ENCODE measurements at regions of chr2 and their contacts with region 1.

Region 1: GRCh38 chr2:112666764-112667122 is 21.0 kb downstream of the SLC20A1 start:
- DNase-seq: no peak
- H3K4me3 ChIP-seq: no peak overlapping the region
- H3K27ac ChIP-seq: no peak overlapping the region
- H3K4me1 ChIP-seq: peaks cover 4% of the 10 kb centered on the region
- H3K27me3 ChIP-seq: no peaks in the 10 kb centered on the region
- CTCF ChIP-seq: no peak

Region 2: GRCh38 chr2:112601751-112602150 is 65.0 kb before region 1 on chr2:
- CTCF ChIA-PET with region 1: no interaction called
- dilution Hi-C with region 1: no loop called
- in situ Hi-C with region 1: no loop called
- intact Hi-C with region 1: no loop called
- DNase-seq: peak; percentile 35
- H3K4me3 ChIP-seq: no peak overlapping the region
- H3K27ac ChIP-seq: no peak overlapping the region
- H3K4me1 ChIP-seq: peaks cover 22% of the 10 kb centered on the region
- H3K27me3 ChIP-seq: no peaks in the 10 kb centered on the region
- CTCF ChIP-seq: no peak

Region 3: DNA sequence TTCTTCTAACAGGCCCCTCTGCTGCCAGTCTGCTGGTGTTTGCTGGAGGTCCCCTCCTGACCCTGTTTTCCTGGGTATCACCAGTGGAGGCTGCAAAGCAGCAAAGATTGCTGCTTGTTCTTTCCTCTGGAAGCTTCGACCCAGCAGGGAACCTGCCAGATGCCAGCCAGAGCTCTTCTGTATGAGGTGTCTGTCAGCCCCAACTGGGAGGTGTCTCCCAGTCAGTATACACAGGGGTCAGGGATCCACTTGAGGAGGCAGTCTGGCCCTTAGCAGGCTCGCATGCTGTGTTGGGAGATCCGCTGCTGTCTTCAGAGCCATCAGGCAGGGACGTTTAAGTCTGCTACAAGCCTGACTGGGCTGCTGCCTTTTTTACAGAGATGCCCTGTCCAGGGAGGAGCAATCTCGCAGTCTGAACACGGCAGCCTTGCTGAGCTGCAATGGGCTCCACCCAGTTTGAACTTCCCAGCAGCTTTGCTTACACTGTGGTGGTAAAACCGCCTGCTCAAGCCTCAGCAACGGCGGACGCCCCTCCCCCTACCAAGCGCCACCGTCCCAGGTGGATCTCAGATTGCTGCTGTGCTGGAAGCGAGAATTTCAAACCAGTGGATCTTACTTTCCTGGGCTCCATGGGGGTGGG is 52.4 kb before region 1 on chr2:
- CTCF ChIA-PET with region 1: no interaction called
- dilution Hi-C with region 1: loop called (anchors 5 kb)
- in situ Hi-C with region 1: no loop called
- intact Hi-C with region 1: no loop called
- DNase-seq: no peak
- H3K4me3 ChIP-seq: no peak overlapping the region
- H3K27ac ChIP-seq: no peak overlapping the region
- H3K4me1 ChIP-seq: no peaks in the 10 kb centered on the region
- H3K27me3 ChIP-seq: no peaks in the 10 kb centered on the region
- CTCF ChIP-seq: no peak

Region 4: DNA sequence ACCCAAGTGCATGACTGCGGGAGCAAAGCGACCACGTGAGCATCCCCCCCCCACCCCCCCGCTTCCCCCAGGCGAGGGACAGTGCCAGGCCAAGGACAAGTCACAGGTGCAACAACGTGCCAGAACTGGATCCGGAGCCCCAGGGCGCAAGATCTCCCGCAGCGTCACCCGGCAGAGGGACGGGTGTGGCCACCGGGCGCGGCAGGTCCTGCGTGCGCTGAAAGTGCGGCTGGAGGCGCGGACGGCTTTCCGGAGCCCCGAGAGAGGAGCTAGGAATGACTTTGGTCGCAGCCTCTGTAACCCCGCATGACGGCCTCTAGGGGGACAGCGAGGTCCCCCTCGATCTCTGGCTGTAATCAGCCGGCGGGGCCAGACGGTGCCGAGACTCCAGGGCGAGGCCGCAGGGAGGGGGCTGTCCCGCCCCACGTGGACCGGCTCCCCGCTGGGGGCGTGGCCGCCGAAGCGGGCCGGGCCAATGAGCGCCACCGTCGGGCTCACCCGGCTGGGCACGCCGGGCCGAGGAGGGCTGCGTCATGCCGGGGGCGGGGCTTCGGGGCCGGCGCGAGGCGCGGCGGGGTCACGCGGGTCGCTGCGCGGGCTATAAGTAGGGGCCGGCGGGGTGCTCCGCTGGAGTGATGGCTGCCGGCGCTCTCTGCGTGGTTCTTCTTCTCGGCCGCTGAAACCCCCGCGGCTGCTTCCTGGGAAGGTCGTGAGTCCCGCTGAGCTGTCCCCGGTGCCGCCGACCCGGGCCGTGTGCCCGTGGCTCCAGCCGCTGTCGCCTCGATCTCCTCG is 21.2 kb before region 1 on chr2 and contains the start of gene SLC20A1:
- CTCF ChIA-PET with region 1: no interaction called
- dilution Hi-C with region 1: no loop called
- in situ Hi-C with region 1: no loop called
- intact Hi-C with region 1: no loop called
- DNase-seq: peak; percentile 96
- H3K4me3 ChIP-seq: peak within 1 kb of the TSS; percentile 84 to 93 (median 85)
- H3K27ac ChIP-seq: peak within 1 kb of the TSS; percentile 94
- H3K4me1 ChIP-seq: peaks cover 51% of the 10 kb centered on the region
- H3K27me3 ChIP-seq: no peaks in the 10 kb centered on the region
- CTCF ChIP-seq: peak; percentile 21 to 40
- total RNA-seq, gene SLC20A1: 227 to 533 TPM

Measured in mammary epithelial cell (primary cell).